IMR-90 (cell line): ENCODE measurements at regions of chr2 and their contacts with region 1.

Region 1: GRCh38 chr2:130797493-130798435 is 39.0 kb upstream of the ARHGEF4 start:
- DNase-seq: peak; percentile 74
- ATAC-seq: peak; percentile 97
- H3K4me3 ChIP-seq: peak overlapping the region; percentile 60
- H3K27ac ChIP-seq: peak overlapping the region; percentile 48
- H3K4me1 ChIP-seq: no peaks in the 10 kb centered on the region
- H3K27me3 ChIP-seq: no peaks in the 10 kb centered on the region; the same call in 1 of the 2 replicates
- CTCF ChIP-seq: peak; percentile 93
- POLR2A ChIP-seq: no peak
- RAD21 ChIP-seq: peak; percentile 91

Region 2: GRCh38 chr2:130873700-130874346 is 76.1 kb after region 1 on chr2:
- CTCF ChIA-PET with region 1: interaction called, 18 read pairs
- POLR2A ChIA-PET with region 1: no interaction called
- dilution Hi-C with region 1: no loop called
- in situ Hi-C with region 1: loop called (anchors 5 kb)
- intact Hi-C with region 1: loop called (anchors 1 kb)
- DNase-seq: peak; percentile 63
- ATAC-seq: peak; percentile 95
- H3K4me3 ChIP-seq: no peak overlapping the region
- H3K27ac ChIP-seq: no peak overlapping the region
- H3K4me1 ChIP-seq: no peaks in the 10 kb centered on the region
- H3K27me3 ChIP-seq: peaks cover 3% of the 10 kb centered on the region; the same call in 1 of the 2 replicates
- CTCF ChIP-seq: peak; percentile 80
- POLR2A ChIP-seq: no peak
- RAD21 ChIP-seq: peak; percentile 80

Region 3: GRCh38 chr2:130920415-130921163 is 122.8 kb after region 1 on chr2:
- CTCF ChIA-PET with region 1: interaction called, 6 read pairs
- POLR2A ChIA-PET with region 1: no interaction called
- dilution Hi-C with region 1: no loop called
- in situ Hi-C with region 1: no loop called
- intact Hi-C with region 1: loop called (anchors 1 kb)
- DNase-seq: peak; percentile 64
- ATAC-seq: peak; percentile 94
- H3K4me3 ChIP-seq: no peak overlapping the region
- H3K27ac ChIP-seq: no peak overlapping the region
- H3K4me1 ChIP-seq: no peaks in the 10 kb centered on the region
- H3K27me3 ChIP-seq: peaks cover 6% of the 10 kb centered on the region; the same call in 1 of the 2 replicates
- CTCF ChIP-seq: peak; percentile 83
- POLR2A ChIP-seq: no peak
- RAD21 ChIP-seq: peak; percentile 62

Region 4: DNA sequence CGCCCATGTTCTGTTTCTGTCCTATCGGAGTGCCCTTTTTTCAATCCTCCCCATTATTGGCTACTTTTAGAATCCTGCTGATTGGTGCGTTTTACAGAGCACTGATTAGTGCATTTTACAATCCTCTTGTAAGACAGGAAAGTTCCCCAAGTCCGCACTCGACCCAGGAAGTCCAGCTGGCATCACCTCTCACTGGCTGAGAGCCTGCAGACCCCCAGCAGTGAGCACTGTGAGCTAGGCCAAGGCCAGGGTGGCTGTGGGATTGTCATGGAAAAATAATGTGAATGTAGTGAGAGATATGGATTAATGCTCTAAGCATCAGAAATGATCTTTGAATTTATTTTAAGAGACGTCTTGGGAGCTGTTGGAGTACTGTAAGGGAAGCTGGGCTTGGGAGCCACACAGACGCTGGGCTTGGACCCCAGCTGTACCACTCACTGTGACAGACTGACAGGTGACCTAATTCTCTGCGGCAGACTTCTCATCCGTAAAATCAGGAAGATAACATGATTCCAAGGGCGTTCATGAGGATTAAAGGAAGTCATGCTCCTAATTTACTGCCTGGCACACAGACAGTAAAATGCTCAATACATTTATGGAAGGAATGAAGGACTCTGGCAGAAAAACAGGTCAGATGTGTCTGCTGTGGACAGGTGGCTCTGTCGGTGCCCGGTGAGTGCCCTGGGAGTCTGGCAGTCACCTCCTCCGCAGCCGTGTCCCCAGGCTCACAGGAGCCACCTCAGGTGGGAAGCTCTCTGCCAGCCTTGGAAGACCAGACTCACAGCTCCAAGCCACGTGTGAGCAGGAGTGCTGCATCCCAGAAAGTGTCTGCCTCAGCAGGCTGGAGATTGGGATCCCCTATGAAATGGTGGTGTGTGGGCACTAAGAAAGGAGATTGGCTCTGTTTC is 190.0 kb after region 1 on chr2:
- CTCF ChIA-PET with region 1: no interaction called
- POLR2A ChIA-PET with region 1: no interaction called
- dilution Hi-C with region 1: no loop called
- in situ Hi-C with region 1: no loop called
- intact Hi-C with region 1: no loop called
- DNase-seq: no peak
- ATAC-seq: no peak
- H3K4me3 ChIP-seq: no peak overlapping the region
- H3K27ac ChIP-seq: no peak overlapping the region
- H3K4me1 ChIP-seq: no peaks in the 10 kb centered on the region
- H3K27me3 ChIP-seq: no peaks in the 10 kb centered on the region
- CTCF ChIP-seq: no peak
- POLR2A ChIP-seq: no peak
- RAD21 ChIP-seq: no peak

Region 5: GRCh38 chr2:131093006-131093695 is 295.4 kb after region 1 on chr2 and contains the start of gene FAM168B:
- CTCF ChIA-PET with region 1: no interaction called
- POLR2A ChIA-PET with region 1: no interaction called
- dilution Hi-C with region 1: no loop called
- in situ Hi-C with region 1: no loop called
- intact Hi-C with region 1: loop called (anchors 10 kb)
- DNase-seq: peak; percentile 88
- ATAC-seq: peak; percentile 91
- H3K4me3 ChIP-seq: peak within 1 kb of the TSS; percentile 89
- H3K27ac ChIP-seq: peak within 1 kb of the TSS; percentile 96
- H3K4me1 ChIP-seq: no peaks in the 10 kb centered on the region
- H3K27me3 ChIP-seq: no peaks in the 10 kb centered on the region
- CTCF ChIP-seq: no peak
- POLR2A ChIP-seq: peak; percentile 93
- RAD21 ChIP-seq: no peak
- total RNA-seq, gene FAM168B: 76.4 and 86.7 TPM in 2 replicates

Region 6: GRCh38 chr2:131145040-131145439 is 347.3 kb after region 1 on chr2:
- CTCF ChIA-PET with region 1: no interaction called
- POLR2A ChIA-PET with region 1: no interaction called
- dilution Hi-C with region 1: no loop called
- in situ Hi-C with region 1: no loop called
- intact Hi-C with region 1: loop called (anchors 5 kb)
- DNase-seq: no peak
- ATAC-seq: no peak
- H3K4me3 ChIP-seq: no peak overlapping the region
- H3K27ac ChIP-seq: no peak overlapping the region
- H3K4me1 ChIP-seq: no peaks in the 10 kb centered on the region
- H3K27me3 ChIP-seq: no peaks in the 10 kb centered on the region
- CTCF ChIP-seq: no peak
- POLR2A ChIP-seq: no peak
- RAD21 ChIP-seq: no peak